ENCODE measurements at regions of chr13 and their contacts with region 1.

Region 1: GRCh38 chr13:49996951-49997895 is at the start of gene TRIM13:
- DNase-seq: peak; percentile 91 to 93
- H3K4me3 ChIP-seq: peak within 1 kb of the TSS; percentile 89 to 93 (median 90)
- H3K27ac ChIP-seq: peak within 1 kb of the TSS; percentile 97 to 99 (median 98)
- H3K4me1 ChIP-seq: peaks cover 29 to 33% of the 10 kb centered on the region in 2 donors
- H3K27me3 ChIP-seq: no peaks in the 10 kb centered on the region
- CTCF ChIP-seq: peak; percentile 22 to 83 (median 71)
- POLR2A ChIP-seq: peak in 1 of 2 donors; percentile 83
- total RNA-seq, gene TRIM13: 24.5 to 38.7 (median 29.0) TPM

Region 2: DNA sequence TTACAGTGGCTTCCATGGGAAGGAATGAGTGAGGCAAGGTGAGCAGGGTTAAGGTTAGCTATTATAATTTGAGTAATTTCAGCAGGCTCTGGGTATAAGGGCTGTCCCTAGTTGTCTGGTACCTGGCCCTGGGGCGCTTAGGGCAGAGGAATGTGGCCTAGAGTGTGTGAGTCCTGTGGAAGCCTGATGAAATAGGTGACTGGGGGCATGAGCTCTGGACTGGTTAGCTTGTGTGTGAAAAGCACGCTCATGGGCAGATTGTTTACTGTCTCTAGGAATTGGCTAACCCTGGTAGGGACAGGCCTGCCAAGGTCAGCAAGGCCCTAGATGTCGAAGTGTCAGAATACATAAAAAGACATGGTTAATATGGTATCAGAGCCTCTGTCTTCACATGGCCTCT is 103.6 kb before region 1 on chr13:
- intact Hi-C with region 1: no loop called
- DNase-seq: no peak
- H3K4me3 ChIP-seq: no peak overlapping the region
- H3K27ac ChIP-seq: no peak overlapping the region
- H3K4me1 ChIP-seq: no peaks in the 10 kb centered on the region
- H3K27me3 ChIP-seq: no peaks in the 10 kb centered on the region
- CTCF ChIP-seq: no peak
- POLR2A ChIP-seq: no peak

Region 3: GRCh38 chr13:50081679-50082425 is 84.6 kb after region 1 on chr13:
- intact Hi-C with region 1: loop called (anchors 10 kb)
- DNase-seq: peak; percentile 97 to 99
- H3K4me3 ChIP-seq: peak overlapping the region; percentile 53 to 77 (median 69)
- H3K27ac ChIP-seq: peak overlapping the region; percentile 34 to 91 (median 76)
- H3K4me1 ChIP-seq: peaks cover 0 to 15% of the 10 kb centered on the region in 2 donors
- H3K27me3 ChIP-seq: no peaks in the 10 kb centered on the region
- CTCF ChIP-seq: peak in 2 of 6 experiments; percentile 11 to 21
- POLR2A ChIP-seq: peak; percentile 11 to 62

Region 4: DNA sequence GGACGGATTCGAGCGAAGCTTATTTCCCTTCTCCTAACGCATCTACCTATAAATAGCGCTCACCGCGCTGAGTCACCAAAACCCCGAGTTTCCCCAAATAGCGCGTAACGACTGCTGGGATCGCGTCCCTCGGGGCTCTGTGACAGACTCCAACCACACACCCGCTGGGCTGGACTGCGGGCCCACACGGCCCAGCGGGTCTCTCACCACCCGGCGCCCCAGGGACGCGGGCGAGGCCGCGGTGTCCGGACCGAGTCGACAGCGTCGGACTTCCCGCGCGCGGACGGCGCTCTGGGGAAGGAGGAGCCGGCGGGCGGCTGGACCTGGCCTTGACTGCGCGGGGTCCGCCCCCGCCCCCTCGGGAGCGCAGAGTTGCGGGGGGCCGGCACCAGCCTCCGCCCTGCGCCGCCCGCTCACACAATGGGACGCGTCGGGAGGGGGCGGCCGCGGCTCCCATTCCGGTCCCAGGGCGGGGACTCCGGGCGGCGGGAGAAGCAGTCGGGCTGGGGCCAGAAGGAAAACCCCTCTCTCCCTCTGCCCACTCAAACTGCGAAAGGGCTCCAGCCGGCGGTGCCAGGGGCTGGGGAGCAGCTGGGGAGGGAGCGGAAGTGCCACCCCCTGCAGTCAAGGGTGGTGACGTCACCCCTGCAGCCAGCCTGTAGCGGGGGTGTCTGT is 126.8 kb after region 1 on chr13:
- intact Hi-C with region 1: loop called (anchors 10 kb)
- DNase-seq: peak; percentile 74 to 96
- H3K4me3 ChIP-seq: peak overlapping the region; percentile 55 to 99 (median 62)
- H3K27ac ChIP-seq: peak overlapping the region; percentile 92 to 100 (median 96)
- H3K4me1 ChIP-seq: peaks cover 9 to 24% of the 10 kb centered on the region in 2 donors
- H3K27me3 ChIP-seq: peaks cover 8% of the 10 kb centered on the region
- CTCF ChIP-seq: peak in 2 of 6 experiments; percentile 2 to 6
- POLR2A ChIP-seq: peak; percentile 48 to 93

Region 5: GRCh38 chr13:50189450-50189849 is 192.2 kb after region 1 on chr13:
- intact Hi-C with region 1: no loop called
- DNase-seq: no peak
- H3K4me3 ChIP-seq: no peak overlapping the region
- H3K27ac ChIP-seq: no peak overlapping the region
- H3K4me1 ChIP-seq: no peaks in the 10 kb centered on the region
- H3K27me3 ChIP-seq: no peaks in the 10 kb centered on the region
- CTCF ChIP-seq: no peak
- POLR2A ChIP-seq: no peak

Region 6: DNA sequence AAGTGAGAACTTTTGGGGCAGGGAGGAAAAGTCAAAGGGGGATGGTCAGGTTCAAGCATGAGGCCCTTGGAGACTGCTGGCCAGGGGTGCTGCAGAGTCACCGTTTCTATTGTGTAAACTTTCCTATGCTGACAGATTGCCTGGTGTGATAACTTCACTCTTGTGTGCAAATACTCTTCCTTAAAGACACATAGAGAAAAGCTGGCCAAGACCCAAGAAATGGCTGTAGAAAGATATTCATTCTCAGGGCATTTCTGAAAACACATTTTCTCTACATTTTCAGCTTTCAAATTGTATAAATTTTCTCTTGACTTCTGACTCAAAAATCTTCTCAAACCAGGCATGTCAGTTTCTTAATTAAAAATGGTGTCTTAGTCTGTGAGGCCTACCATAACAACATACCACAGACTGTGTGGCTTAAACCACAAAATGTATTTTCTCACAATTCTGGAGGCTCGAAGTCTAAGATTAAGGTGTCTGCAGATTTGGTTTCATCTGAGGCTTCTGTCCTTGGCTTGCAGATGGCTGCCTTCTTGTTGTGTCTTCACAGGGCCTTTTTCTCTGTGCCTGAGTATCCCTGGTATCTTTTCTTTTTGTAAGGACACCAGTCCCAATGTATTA is 322.5 kb after region 1 on chr13:
- intact Hi-C with region 1: no loop called
- DNase-seq: peak; percentile 14 to 23
- H3K4me3 ChIP-seq: no peak overlapping the region
- H3K27ac ChIP-seq: peak overlapping the region in 1 of 3 donors; percentile 2
- H3K4me1 ChIP-seq: peaks cover 5 to 6% of the 10 kb centered on the region in 2 donors
- H3K27me3 ChIP-seq: no peaks in the 10 kb centered on the region
- CTCF ChIP-seq: no peak
- POLR2A ChIP-seq: no peak